GM10248 (cell line): ENCODE measurements at regions of chr7 and their contacts with region 1.

Region 1: GRCh38 chr7:107879400-107880035 is 11.5 kb upstream of the DLD start:
- DNase-seq: peak; percentile 45
- CTCF ChIP-seq: peak; percentile 76

Region 2: DNA sequence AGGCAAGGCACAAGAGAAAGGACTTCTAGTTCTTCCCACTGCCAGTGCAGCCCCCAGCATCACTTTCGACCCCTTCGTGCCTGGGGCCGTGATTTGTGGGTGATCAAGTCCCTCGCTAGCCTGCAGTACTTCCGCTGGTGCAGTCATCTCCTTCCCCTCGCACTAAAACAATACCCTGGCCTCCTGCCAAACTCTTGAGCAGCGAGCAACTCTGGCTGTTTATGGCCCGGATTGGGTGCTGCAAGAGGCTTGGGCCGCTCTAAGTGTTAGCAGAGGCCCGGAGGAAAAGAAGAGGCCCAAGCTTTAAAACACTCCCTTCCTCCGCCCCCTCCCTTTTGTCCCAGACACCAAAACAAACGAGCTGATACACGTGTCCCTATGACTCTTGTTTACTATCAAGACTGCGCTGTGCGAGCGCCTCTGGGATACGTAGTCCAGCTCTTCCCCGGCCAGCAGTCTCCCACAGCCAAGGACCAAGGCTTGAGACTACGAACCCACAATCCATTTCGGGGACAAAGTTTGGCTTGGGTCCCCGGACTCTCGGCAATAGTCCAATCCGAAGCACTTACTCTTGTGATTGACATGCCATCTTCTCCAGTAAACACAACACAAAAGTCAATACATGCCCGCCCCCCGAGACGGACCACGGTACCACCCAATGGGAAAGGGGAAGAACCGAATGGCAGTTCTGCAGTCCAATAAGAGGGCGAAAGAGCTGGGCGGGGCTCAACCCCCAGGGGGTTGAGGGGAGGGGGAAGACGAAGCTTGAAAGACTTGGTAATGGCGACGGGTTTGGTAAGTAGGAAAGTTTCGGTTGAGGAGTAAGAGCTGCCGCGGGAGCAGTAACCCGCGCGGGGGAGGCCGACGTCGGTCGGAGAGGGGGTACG is 711.0 kb before region 1 on chr7 and contains the start of gene HBP1:
- CTCF ChIA-PET with region 1: interaction called, 4 read pairs
- POLR2A ChIA-PET with region 1: interaction called, 13 read pairs
- DNase-seq: peak; percentile 93
- CTCF ChIP-seq: no peak

Region 3: DNA sequence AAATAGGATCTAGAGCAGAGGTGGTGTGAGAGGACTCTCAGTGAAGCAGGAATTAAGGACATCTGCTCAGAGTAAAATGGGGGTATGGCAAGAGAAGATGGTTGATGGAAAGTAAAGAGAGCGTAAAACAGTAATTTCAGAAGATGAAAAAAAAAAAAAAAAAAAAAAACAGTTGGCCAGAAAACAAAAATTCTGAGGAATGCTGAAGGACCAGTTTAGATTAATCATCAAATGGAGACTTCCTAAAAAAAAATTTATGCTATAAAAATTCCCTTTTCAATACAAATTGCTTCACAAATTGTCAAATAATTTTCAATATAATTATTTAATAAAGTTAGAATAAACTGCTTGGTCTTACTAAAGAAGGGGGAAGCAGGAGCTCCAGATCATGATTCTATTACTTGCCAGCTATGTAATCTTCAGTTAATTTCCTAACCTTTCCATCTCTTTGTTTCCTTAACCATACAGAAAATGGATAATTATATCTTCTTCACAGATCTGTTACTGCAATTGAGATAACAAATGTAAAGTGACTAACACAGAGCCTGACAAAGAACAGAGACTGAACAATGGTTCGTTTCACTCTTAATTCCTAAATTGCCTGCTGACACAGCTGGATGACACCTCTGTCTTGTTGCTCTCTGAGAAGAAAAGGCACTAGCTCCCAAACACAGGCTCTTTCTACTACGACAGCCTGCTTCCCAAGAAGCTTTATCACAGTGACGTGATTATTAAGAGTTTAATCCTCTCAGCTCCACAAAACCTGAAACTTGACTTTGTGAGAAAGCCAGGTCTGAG is 474.6 kb before region 1 on chr7:
- CTCF ChIA-PET with region 1: no interaction called
- POLR2A ChIA-PET with region 1: no interaction called
- DNase-seq: no peak
- CTCF ChIP-seq: no peak

Region 4: GRCh38 chr7:107743567-107744344 is 135.8 kb before region 1 on chr7 and contains the start of gene CBLL1:
- CTCF ChIA-PET with region 1: interaction called, 20 read pairs
- POLR2A ChIA-PET with region 1: no interaction called
- DNase-seq: peak; percentile 91
- CTCF ChIP-seq: peak; percentile 82

Region 5: GRCh38 chr7:107838816-107839565 is 40.5 kb before region 1 on chr7:
- CTCF ChIA-PET with region 1: interaction called, 10 read pairs
- POLR2A ChIA-PET with region 1: no interaction called
- DNase-seq: no peak
- CTCF ChIP-seq: no peak

Region 6: GRCh38 chr7:107856806-107857540 is 22.5 kb before region 1 on chr7:
- CTCF ChIA-PET with region 1: interaction called, 11 read pairs
- POLR2A ChIA-PET with region 1: no interaction called
- DNase-seq: no peak
- CTCF ChIP-seq: no peak

Region 7: DNA sequence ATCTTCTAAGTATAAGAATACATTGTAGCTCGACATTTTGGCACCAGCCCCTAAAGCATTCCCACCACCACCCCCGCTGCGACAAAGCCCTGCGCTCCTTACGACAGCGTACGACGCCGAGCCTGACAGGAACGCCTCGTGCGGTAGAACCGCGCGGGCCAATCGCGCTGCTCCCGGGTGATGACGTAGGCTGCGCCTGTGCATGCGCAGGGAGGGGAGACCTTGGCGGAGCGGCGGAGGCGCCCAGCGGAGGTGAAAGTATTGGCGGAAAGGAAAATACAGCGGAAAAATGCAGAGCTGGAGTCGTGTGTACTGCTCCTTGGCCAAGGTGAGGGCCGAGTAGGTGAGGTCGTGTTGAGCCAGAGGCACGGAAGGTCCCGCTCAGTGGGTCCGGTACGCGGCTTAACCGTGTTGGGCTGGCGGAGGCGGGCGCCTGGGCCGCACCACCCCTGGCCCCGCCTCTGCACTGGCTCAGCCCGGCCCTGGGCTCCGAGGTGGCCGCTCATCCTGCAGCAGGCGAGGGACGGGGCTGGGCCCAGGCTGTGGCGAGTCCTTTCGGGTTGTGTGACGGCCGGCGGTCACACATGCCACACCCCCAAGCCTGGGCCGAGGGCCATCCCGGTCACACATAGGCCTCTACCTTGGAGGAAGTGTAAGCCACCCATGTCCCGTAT is 11.6 kb after region 1 on chr7 and contains the start of gene DLD:
- CTCF ChIA-PET with region 1: interaction called, 39 read pairs
- POLR2A ChIA-PET with region 1: no interaction called
- DNase-seq: peak; percentile 95
- CTCF ChIP-seq: no peak

Region 8: DNA sequence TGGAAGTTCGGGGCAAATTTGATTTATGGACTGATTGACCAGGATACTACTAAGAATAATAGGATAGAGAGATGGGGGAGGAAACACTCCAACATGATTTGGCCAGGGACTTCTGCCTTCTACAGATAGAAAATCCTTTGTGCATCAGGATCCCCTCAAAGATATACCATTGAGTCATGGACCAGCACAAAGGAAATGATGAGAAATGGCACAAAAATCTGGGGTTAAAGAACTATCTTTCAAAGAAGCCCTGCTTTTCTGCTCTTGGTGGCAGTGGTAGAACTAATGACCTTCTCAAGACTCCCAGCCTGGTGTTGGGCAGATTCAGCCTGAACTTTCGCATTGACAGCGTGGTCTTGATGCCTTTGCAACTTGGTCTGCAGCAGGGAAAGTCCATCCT is 151.0 kb after region 1 on chr7:
- CTCF ChIA-PET with region 1: no interaction called
- POLR2A ChIA-PET with region 1: no interaction called
- DNase-seq: no peak
- CTCF ChIP-seq: no peak

Region 9: DNA sequence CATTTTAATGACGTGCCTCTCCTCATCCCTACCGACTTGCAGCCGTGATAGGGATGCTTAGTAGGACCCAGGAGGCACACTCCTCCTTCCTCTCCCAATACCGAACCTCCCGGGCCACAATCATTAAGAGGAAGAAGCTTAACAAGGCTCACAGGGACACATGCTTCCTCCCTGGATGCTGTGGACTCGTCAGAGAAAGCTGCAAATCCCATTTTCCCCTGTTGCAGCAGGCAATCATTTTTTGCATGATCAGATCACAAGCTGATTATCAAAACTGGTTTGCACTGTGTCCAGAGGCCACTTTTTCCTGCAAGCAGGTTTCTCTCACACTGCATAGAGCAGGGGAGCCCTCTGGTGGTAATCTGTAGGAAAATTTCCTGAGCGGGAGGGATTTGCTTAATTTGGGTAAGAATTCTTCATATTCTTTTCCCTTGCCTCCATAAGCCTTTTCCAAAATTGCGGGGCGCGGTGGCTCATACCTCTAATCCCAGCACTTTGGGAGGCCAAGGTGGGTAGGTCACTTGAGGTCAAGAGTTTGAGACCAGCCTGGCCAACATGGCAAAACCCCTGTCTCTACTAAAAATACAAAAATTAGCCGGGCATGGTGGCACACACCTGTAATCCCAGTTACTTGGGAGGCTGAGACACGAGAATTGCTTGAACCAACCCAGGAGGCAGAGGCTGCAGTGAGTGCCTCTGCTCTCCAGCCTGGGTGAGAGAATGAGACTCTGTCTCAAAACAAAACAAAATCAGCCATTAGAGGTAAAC is 266.7 kb after region 1 on chr7:
- CTCF ChIA-PET with region 1: interaction called, 11 read pairs
- POLR2A ChIA-PET with region 1: no interaction called
- DNase-seq: peak; percentile 25
- CTCF ChIP-seq: peak; percentile 80

Region 10: DNA sequence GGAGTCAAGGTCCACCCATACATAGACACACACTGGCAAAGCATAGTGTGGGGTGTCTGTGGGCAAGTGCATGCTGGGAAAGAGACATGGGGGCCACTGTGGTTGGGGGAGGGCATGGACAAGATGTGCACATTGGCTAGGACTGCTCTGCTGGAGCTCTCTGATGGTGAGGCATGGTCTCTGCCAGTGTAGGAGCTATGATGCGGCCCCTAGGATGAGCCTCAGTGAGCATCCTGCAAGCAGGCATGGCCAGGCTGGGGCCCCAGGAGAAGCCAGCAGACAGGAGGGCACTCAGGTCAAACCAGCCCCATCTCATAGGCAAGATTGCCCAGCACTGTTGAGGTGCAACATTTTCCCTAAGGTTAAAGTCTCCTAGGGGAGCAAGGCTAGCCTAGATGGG is 1179.6 kb after region 1 on chr7:
- CTCF ChIA-PET with region 1: no interaction called
- POLR2A ChIA-PET with region 1: no interaction called
- DNase-seq: no peak
- CTCF ChIP-seq: no peak